Cardiac septum (tissue), 1 donor: ENCODE measurements at regions of chr7 and their contacts with region 1.

Region 1: DNA sequence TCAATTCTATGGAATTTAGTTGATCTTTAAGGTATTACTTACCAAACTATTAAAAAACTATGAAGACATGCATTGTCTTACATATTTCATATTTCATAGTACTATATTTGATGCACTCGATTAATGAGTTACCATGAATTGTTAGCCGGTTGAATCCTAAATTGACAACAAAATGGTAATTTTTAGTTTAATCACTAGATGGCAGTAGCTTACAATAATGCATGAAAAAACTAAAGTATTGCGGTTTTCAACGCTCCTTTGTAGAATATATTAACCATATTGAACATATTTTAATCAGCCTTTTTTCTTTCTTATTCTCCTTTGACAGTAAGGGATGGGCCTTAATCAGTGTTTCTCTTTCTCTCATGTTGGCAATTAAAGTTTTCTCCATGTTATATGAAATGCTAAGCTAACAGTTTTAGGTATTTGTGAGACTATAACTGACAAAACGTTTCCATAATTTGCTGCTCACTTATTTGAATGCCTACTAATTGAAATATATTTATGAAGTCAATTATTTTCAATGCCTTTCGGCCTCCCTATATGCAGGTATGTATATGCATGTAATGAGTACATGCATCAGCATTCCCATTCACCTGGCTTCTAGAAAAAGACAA is 48.5 kb upstream of the ARL4A start:
- DNase-seq: no peak

Region 2: DNA sequence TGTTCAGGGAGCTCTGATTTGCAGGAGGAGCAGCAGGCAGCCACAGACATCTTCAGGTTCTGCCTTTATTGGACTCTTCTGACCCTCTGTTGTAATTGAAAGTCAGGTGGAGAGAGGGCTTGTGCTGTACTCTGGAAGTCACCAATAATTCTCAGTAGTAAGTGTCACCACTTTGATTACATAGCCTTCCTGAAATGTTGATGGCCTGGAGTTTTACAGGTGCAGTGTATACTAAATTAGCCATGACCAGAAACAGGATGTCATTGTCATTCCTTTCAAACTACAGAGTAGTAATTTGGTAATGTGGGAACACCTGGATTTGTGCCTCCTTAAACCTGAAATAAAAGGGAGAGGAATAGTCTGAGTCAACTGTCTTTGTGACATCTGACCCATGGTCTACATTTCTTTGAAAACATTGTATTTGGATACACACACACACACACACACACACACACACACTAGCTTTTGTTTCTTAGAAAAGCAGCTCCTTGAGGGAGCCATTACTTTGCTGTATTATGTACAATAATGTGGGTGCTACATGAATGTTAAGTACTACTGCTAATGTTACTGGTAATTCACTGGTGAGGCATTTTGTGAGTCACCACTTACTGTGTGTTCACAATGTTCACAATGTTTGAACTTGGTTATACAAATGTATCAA is 68.0 kb after region 1 on chr7:
- intact Hi-C with region 1: no loop called
- DNase-seq: no peak

Region 3: DNA sequence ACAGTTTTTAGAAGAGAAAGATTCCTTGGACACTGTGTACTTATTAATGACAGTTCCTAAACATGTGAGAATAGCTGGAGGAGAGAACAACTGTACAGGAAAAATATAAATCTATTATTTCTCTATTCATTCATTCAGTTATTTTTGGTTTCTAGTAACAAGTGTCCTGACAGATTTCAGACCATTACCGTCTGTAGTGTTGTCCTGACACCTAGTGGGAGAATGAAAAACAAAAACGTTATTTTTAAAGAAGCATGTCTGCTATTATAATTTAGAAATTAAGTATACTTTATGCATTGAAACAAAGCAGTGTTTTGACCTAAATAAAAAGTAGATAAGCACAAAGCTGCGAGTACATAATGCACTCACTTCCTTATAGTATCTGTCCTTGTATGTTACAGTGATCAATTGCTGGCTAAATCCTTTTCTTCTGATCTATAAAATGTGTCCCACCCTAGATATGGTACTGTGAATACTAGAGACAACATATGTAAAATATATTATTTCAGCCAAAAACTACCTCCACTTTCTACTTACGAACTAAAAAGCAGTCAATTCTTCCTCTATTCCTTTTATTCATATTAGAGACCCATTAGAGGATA is 624.1 kb after region 1 on chr7:
- intact Hi-C with region 1: loop called (anchors 2 kb)
- DNase-seq: no peak